CD8-positive, alpha-beta T cell (primary cell): ENCODE measurements at regions of chr12 and their contacts with region 1.

Region 1: GRCh38 chr12:57904848-57905811 is 36.2 kb upstream of the ATP23 start:
- DNase-seq: peak; percentile 73 to 90 (median 85)
- ATAC-seq: peak; percentile 100
- H3K4me3 ChIP-seq: no peak overlapping the region
- H3K4me3 Mint-ChIP-seq: peak overlapping the region; percentile 61
- H3K27ac ChIP-seq: no peak overlapping the region
- H3K27ac Mint-ChIP-seq: no peak overlapping the region
- H3K4me1 ChIP-seq: peaks cover 3% of the 10 kb centered on the region
- H3K4me1 Mint-ChIP-seq: peaks cover 5% of the 10 kb centered on the region
- H3K27me3 ChIP-seq: peaks cover 0 to 2% of the 10 kb centered on the region in 2 experiments
- H3K27me3 Mint-ChIP-seq: peaks cover 5% of the 10 kb centered on the region
- CTCF ChIP-seq: peak; percentile 100

Region 2: GRCh38 chr12:57583008-57583831 is 321.9 kb before region 1 on chr12:
- CTCF ChIA-PET with region 1: interaction called, 4 read pairs
- POLR2A ChIA-PET with region 1: no interaction called
- intact Hi-C with region 1: loop called (anchors 2 kb)
- DNase-seq: peak; percentile 30 to 90 (median 74)
- ATAC-seq: peak; percentile 100
- H3K4me3 ChIP-seq: no peak overlapping the region
- H3K4me3 Mint-ChIP-seq: no peak overlapping the region
- H3K27ac ChIP-seq: no peak overlapping the region
- H3K27ac Mint-ChIP-seq: no peak overlapping the region
- H3K4me1 ChIP-seq: no peaks in the 10 kb centered on the region
- H3K4me1 Mint-ChIP-seq: peaks cover 2% of the 10 kb centered on the region
- H3K27me3 ChIP-seq: peaks cover 0 to 7% of the 10 kb centered on the region in 2 experiments
- H3K27me3 Mint-ChIP-seq: no peaks in the 10 kb centered on the region
- CTCF ChIP-seq: peak; percentile 95

Region 3: DNA sequence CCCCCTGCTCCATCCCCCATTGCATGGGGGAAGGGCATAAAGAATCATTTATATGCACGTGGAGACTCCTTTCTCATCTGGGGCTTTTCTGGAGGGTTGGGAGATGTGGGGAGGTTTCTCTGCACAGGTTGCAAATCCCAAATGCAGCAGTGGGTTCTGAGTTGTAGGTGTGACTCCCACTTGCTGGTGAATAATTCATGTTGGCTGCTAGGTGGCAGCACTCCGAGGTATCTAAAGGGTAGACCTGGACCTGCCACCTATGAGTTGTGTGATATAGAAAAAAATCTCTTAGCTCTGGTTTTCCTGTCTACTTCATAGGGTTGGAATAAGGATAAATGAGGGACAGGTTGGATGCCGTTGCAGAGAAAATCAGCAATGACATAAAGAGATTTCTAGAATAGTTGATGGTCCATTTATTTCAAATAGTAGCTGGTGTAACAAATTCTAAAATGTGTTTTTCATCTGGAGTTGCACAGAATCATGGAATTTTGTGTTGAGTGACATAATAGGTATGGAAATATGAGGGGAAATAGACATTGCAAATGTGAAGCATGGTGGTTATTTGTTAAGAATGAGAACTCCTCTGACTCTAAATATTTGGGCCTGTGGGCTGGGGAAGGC is 145.7 kb before region 1 on chr12:
- CTCF ChIA-PET with region 1: interaction called, 33 read pairs
- POLR2A ChIA-PET with region 1: interaction called, 3 read pairs
- intact Hi-C with region 1: loop called (anchors 1 kb)
- DNase-seq: peak in 6 of 9 experiments; percentile 31 to 71 (median 50)
- ATAC-seq: no peak
- H3K4me3 ChIP-seq: no peak overlapping the region
- H3K4me3 Mint-ChIP-seq: no peak overlapping the region
- H3K27ac ChIP-seq: no peak overlapping the region
- H3K27ac Mint-ChIP-seq: peak overlapping the region; percentile 10
- H3K4me1 ChIP-seq: peaks cover 18% of the 10 kb centered on the region
- H3K4me1 Mint-ChIP-seq: peaks cover 37% of the 10 kb centered on the region
- H3K27me3 ChIP-seq: peaks cover 0 to 8% of the 10 kb centered on the region in 2 experiments
- H3K27me3 Mint-ChIP-seq: peaks cover 7% of the 10 kb centered on the region
- CTCF ChIP-seq: peak; percentile 56

Region 4: GRCh38 chr12:57803319-57803893 is 101.7 kb before region 1 on chr12:
- CTCF ChIA-PET with region 1: interaction called, 88 read pairs
- POLR2A ChIA-PET with region 1: interaction called, 4 read pairs
- intact Hi-C with region 1: loop called (anchors 1 kb)
- DNase-seq: peak in 6 of 9 experiments; percentile 11 to 48 (median 40)
- ATAC-seq: peak; percentile 55
- H3K4me3 ChIP-seq: no peak overlapping the region
- H3K4me3 Mint-ChIP-seq: no peak overlapping the region
- H3K27ac ChIP-seq: no peak overlapping the region
- H3K27ac Mint-ChIP-seq: no peak overlapping the region
- H3K4me1 ChIP-seq: no peaks in the 10 kb centered on the region
- H3K4me1 Mint-ChIP-seq: no peaks in the 10 kb centered on the region
- H3K27me3 ChIP-seq: no peaks in the 10 kb centered on the region
- H3K27me3 Mint-ChIP-seq: no peaks in the 10 kb centered on the region
- CTCF ChIP-seq: peak; percentile 71

Region 5: GRCh38 chr12:57829025-57829777 is 75.9 kb before region 1 on chr12:
- CTCF ChIA-PET with region 1: interaction called, 102 read pairs
- POLR2A ChIA-PET with region 1: interaction called, 3 read pairs
- intact Hi-C with region 1: loop called (anchors 1 kb)
- DNase-seq: no peak
- ATAC-seq: no peak
- H3K4me3 ChIP-seq: no peak overlapping the region
- H3K4me3 Mint-ChIP-seq: no peak overlapping the region
- H3K27ac ChIP-seq: no peak overlapping the region
- H3K27ac Mint-ChIP-seq: peak overlapping the region; percentile 49
- H3K4me1 ChIP-seq: peaks cover 39% of the 10 kb centered on the region
- H3K4me1 Mint-ChIP-seq: peaks cover 47% of the 10 kb centered on the region
- H3K27me3 ChIP-seq: no peaks in the 10 kb centered on the region
- H3K27me3 Mint-ChIP-seq: no peaks in the 10 kb centered on the region
- CTCF ChIP-seq: no peak

Region 6: GRCh38 chr12:57846577-57847319 is 58.4 kb before region 1 on chr12 and contains the start of gene CTDSP2:
- CTCF ChIA-PET with region 1: interaction called, 19 read pairs
- POLR2A ChIA-PET with region 1: interaction called, 7 read pairs
- intact Hi-C with region 1: loop called in 1 of 2 experiments (anchors 5 kb)
- DNase-seq: peak; percentile 52 to 95 (median 88)
- ATAC-seq: peak; percentile 39
- H3K4me3 ChIP-seq: peak within 1 kb of the TSS; percentile 95 to 100
- H3K4me3 Mint-ChIP-seq: peak within 1 kb of the TSS; percentile 87
- H3K27ac ChIP-seq: peak within 1 kb of the TSS; percentile 81
- H3K27ac Mint-ChIP-seq: peak within 1 kb of the TSS; percentile 90
- H3K4me1 ChIP-seq: peaks cover 36% of the 10 kb centered on the region
- H3K4me1 Mint-ChIP-seq: peaks cover 45% of the 10 kb centered on the region
- H3K27me3 ChIP-seq: no peaks in the 10 kb centered on the region
- H3K27me3 Mint-ChIP-seq: peaks cover 4% of the 10 kb centered on the region
- CTCF ChIP-seq: no peak
- total RNA-seq, gene CTDSP2: 68.1 to 70.5 TPM

Region 7: DNA sequence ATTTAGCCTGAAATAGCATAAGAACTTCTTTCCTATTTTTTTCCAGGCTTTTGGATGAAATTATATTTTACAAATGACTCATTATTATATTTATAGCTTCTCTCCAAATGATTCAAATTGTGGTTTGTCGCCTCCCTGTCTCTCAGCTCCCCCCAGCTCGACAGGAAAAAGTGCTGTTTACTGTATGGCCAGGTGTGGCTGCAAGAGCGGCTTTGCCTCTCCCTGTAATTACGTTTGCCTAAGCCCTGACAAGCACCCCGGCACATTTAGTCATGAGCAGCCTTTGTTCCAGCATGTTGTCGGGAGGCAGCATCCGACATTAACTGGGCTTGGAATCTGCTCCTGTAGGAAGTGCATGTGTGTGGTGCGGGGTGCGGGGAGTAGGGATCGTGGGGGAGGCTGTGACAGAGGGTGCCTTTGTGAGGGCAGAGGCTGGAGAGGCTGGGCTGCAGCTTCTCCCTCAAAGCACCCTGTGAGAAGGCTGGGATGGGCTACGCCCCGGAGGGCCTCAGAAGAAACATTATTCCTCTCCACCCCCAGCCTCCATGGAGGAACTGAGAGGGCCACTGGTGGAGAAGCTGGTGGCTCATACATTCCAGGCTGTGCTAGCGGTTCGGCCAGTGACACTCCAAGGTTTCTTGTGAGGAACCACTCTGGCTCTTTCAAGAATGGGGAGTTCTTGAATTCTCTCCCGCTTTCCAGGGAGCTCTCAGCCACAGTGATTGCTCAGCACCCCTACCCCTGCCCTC is 16.5 kb before region 1 on chr12:
- CTCF ChIA-PET with region 1: interaction called, 11 read pairs
- POLR2A ChIA-PET with region 1: no interaction called
- intact Hi-C with region 1: no loop called
- DNase-seq: peak in 2 of 9 experiments; percentile 21 to 44
- ATAC-seq: peak; percentile 36
- H3K4me3 ChIP-seq: no peak overlapping the region
- H3K4me3 Mint-ChIP-seq: no peak overlapping the region
- H3K27ac ChIP-seq: no peak overlapping the region
- H3K27ac Mint-ChIP-seq: no peak overlapping the region
- H3K4me1 ChIP-seq: peaks cover 5% of the 10 kb centered on the region
- H3K4me1 Mint-ChIP-seq: peaks cover 4% of the 10 kb centered on the region
- H3K27me3 ChIP-seq: no peaks in the 10 kb centered on the region
- H3K27me3 Mint-ChIP-seq: no peaks in the 10 kb centered on the region
- CTCF ChIP-seq: no peak

Region 8: DNA sequence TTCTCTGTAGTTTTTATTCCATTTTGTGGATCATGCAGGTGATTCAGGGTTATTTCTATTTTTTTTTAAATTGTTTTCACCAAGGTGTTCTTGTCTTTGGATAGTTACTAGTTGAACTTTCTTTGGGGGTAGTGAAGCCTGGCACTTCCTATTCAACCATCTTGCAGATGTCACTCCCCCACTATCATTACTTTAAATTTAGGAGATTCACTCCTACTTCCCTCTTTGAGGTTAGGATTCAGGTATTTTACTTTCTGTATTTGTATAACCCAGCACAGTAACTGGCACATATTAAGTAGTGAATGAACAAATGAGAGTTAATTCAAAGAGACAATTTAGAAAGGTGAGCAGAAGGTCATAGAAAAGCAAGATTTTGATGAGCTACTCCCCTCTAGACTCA is 291.8 kb after region 1 on chr12:
- CTCF ChIA-PET with region 1: no interaction called
- POLR2A ChIA-PET with region 1: no interaction called
- intact Hi-C with region 1: no loop called
- DNase-seq: no peak
- ATAC-seq: no peak
- H3K4me3 ChIP-seq: no peak overlapping the region
- H3K4me3 Mint-ChIP-seq: no peak overlapping the region
- H3K27ac ChIP-seq: no peak overlapping the region
- H3K27ac Mint-ChIP-seq: no peak overlapping the region
- H3K4me1 ChIP-seq: no peaks in the 10 kb centered on the region
- H3K4me1 Mint-ChIP-seq: no peaks in the 10 kb centered on the region
- H3K27me3 ChIP-seq: peaks cover 0 to 2% of the 10 kb centered on the region in 2 experiments
- H3K27me3 Mint-ChIP-seq: peaks cover 38% of the 10 kb centered on the region
- CTCF ChIP-seq: no peak